ENCODE measurements at regions of chr3 and their contacts with region 1.

Region 1: GRCh38 chr3:107800710-107801109 is 277.9 kb downstream of the BBX start:
- DNase-seq: no peak
- H3K4me3 ChIP-seq: peak overlapping the region in 44 of 59 donors; percentile 1 to 52 (median 26)
- H3K27ac ChIP-seq: peak overlapping the region; percentile 2 to 97 (median 89)
- H3K27me3 ChIP-seq: no peaks in the 10 kb centered on the region
- CTCF ChIP-seq: peak in 2 of 56 donors; percentile 13 to 14

Region 2: GRCh38 chr3:107846279-107846852 is 45.7 kb after region 1 on chr3:
- intact Hi-C with region 1: loop called in 1 of 2 experiments (anchors 5 kb)
- DNase-seq: peak in 9 of 10 donors; percentile 42 to 79 (median 68)
- H3K4me3 ChIP-seq: no peak overlapping the region
- H3K27ac ChIP-seq: peak overlapping the region in 36 of 59 donors; percentile 0 to 75 (median 46)
- H3K27me3 ChIP-seq: no peaks in the 10 kb centered on the region
- CTCF ChIP-seq: peak in 55 of 56 donors; percentile 23 to 76 (median 59)